ENCODE measurements at regions of chr6 and their contacts with region 1.

Region 1: DNA sequence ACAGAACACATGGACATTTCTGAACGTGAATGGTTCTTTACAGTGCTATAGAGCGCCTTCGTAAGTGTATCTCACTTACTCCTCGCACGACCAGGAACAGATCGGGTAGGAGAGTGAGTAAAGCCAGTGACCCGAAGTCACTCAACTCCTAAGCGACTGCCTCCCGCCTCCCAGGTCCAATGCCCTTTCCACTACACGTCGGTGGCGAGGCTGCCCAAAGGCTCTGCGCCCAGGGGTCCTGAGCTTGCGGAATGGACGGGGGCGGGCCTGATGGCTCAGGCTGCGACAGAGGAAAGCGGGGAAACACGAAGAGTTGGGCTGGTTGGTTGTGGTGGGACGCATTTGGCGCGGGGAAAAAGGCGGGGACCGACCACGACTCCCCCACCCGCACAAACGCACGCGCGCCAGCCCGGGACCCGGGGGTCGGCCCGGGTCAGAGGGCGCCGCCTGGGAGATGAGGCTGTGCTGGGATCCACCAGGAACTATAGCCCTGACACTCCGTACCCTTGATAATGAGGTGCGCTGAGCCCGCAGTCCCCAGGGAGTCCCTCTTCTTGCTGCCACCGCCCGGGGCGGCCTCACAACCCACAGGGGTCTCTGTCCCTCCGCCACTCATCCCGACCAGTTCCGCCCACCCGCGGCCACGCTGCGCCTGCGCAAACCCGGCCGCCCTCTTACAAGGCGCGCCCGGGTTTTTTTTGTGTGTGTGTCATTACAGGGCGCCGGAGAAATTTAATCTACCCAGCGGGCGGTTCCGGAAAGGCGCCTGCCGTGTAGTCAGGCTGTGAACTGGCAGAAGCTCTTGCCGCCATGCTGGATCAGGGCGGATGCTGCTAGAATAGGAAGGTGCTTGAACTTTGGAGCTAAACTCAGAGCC is at the start of gene BLOC1S5:
- DNase-seq: peak; percentile 96
- ATAC-seq: peak; percentile 90
- H3K4me3 Mint-ChIP-seq: peak within 1 kb of the TSS; percentile 93
- H3K27ac Mint-ChIP-seq: peak within 1 kb of the TSS; percentile 91
- H3K4me1 Mint-ChIP-seq: peaks cover 25% of the 10 kb centered on the region
- H3K27me3 Mint-ChIP-seq: no peaks in the 10 kb centered on the region
- CTCF ChIP-seq: no peak
- total RNA-seq, gene BLOC1S5: 13.8 and 16.8 TPM in 2 replicates

Region 2: GRCh38 chr6:6676910-6677441 is 1387.0 kb before region 1 on chr6:
- CTCF ChIA-PET with region 1: no interaction called
- POLR2A ChIA-PET with region 1: no interaction called
- intact Hi-C with region 1: loop called (anchors 5 kb)
- DNase-seq: peak; percentile 65
- ATAC-seq: peak; percentile 94
- H3K4me3 Mint-ChIP-seq: no peak overlapping the region
- H3K27ac Mint-ChIP-seq: no peak overlapping the region
- H3K4me1 Mint-ChIP-seq: peaks cover 8% of the 10 kb centered on the region
- H3K27me3 Mint-ChIP-seq: peaks cover 6% of the 10 kb centered on the region
- CTCF ChIP-seq: peak; percentile 95

Region 3: GRCh38 chr6:7312616-7313504 is 751.1 kb before region 1 on chr6 and contains the start of gene SSR1:
- CTCF ChIA-PET with region 1: no interaction called
- POLR2A ChIA-PET with region 1: no interaction called
- intact Hi-C with region 1: loop called (anchors 1 kb)
- DNase-seq: peak; percentile 94
- ATAC-seq: peak; percentile 98
- H3K4me3 Mint-ChIP-seq: peak within 1 kb of the TSS; percentile 94
- H3K27ac Mint-ChIP-seq: peak within 1 kb of the TSS; percentile 84
- H3K4me1 Mint-ChIP-seq: peaks cover 39% of the 10 kb centered on the region
- H3K27me3 Mint-ChIP-seq: no peaks in the 10 kb centered on the region
- CTCF ChIP-seq: no peak
- total RNA-seq, gene SSR1: 83.4 and 86.7 TPM in 2 replicates

Region 4: DNA sequence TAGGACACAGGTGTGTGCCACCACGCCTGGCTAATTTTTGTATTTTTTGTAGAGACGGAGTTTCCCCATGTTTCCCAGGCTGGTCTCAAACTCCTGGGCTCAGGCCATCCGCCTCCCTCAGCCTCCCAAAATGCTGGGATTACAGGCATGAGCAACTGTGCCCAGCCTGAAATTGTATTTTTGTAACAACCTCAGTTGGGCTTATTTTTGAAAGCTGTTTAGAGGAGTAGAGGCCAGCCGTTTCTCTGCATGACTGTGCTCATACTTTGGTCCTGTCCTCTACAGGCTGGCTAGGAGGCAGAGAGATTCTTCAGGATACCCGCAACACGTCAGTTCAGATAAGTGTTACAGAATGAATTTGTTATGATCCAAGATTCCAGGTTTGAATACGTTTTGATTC is 696.6 kb before region 1 on chr6:
- CTCF ChIA-PET with region 1: no interaction called
- POLR2A ChIA-PET with region 1: no interaction called
- intact Hi-C with region 1: no loop called
- DNase-seq: no peak
- ATAC-seq: no peak
- H3K4me3 Mint-ChIP-seq: no peak overlapping the region
- H3K27ac Mint-ChIP-seq: no peak overlapping the region
- H3K4me1 Mint-ChIP-seq: no peaks in the 10 kb centered on the region
- H3K27me3 Mint-ChIP-seq: peaks cover 13% of the 10 kb centered on the region
- CTCF ChIP-seq: no peak

Region 5: DNA sequence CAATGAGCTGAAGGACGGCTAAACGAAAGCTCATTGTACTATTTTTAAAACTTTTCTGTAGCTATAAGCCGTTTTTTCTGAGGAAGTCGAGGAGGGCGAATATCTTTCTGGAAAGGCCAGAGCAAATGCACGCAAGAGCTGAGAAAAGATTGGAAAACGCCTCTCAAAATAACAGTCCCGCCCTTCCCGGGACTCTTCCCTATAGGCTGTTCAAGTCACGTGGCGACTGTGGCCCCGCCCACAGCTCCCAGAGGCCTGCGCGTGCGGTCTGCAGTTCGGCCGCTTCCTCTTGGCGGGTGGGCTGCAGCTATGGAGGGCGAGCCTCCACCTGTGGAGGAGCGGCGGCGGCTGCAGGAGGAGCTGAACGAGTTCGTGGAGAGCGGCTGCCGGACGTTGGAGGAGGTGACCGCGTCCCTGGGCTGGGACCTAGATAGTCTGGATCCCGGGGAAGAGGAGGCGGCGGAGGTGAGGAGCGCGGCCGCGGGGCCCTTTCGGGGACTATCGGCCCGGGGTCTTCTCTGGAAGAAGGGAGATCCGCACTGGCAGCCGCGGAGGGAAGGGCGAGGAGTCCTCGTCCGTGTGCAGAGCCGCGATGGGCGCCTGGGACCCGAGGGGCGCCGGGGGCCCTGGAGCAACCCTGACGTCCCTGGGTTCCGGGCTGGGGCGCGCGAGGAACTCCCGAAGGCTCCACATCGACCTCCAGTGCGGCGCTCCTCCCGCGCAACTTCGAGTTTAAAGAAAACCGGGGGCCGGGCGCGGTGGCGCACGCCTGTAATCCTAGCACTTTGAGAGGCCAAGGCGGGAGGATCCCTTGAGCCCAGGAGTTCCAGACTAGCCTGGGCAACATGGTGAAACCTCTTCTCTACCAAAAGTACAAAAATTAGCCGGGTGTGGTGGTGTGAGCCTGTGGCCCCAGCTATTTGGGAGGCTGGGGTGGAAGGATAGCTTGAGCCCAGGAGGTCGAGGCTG is 473.8 kb before region 1 on chr6 and contains the start of gene SNRNP48:
- CTCF ChIA-PET with region 1: interaction called, 3 read pairs
- POLR2A ChIA-PET with region 1: no interaction called
- intact Hi-C with region 1: loop called (anchors 1 kb)
- DNase-seq: peak; percentile 88
- ATAC-seq: peak; percentile 100
- H3K4me3 Mint-ChIP-seq: peak within 1 kb of the TSS; percentile 98
- H3K27ac Mint-ChIP-seq: peak within 1 kb of the TSS; percentile 84
- H3K4me1 Mint-ChIP-seq: peaks cover 31% of the 10 kb centered on the region
- H3K27me3 Mint-ChIP-seq: no peaks in the 10 kb centered on the region
- CTCF ChIP-seq: no peak
- total RNA-seq, gene SNRNP48: 15.4 and 18.7 TPM in 2 replicates

Region 6: GRCh38 chr6:7899101-7899888 is 164.7 kb before region 1 on chr6:
- CTCF ChIA-PET with region 1: no interaction called
- POLR2A ChIA-PET with region 1: no interaction called
- intact Hi-C with region 1: loop called (anchors 1 kb)
- DNase-seq: no peak
- ATAC-seq: peak; percentile 61
- H3K4me3 Mint-ChIP-seq: no peak overlapping the region
- H3K27ac Mint-ChIP-seq: no peak overlapping the region
- H3K4me1 Mint-ChIP-seq: peaks cover 32% of the 10 kb centered on the region
- H3K27me3 Mint-ChIP-seq: no peaks in the 10 kb centered on the region
- CTCF ChIP-seq: no peak

Region 7: DNA sequence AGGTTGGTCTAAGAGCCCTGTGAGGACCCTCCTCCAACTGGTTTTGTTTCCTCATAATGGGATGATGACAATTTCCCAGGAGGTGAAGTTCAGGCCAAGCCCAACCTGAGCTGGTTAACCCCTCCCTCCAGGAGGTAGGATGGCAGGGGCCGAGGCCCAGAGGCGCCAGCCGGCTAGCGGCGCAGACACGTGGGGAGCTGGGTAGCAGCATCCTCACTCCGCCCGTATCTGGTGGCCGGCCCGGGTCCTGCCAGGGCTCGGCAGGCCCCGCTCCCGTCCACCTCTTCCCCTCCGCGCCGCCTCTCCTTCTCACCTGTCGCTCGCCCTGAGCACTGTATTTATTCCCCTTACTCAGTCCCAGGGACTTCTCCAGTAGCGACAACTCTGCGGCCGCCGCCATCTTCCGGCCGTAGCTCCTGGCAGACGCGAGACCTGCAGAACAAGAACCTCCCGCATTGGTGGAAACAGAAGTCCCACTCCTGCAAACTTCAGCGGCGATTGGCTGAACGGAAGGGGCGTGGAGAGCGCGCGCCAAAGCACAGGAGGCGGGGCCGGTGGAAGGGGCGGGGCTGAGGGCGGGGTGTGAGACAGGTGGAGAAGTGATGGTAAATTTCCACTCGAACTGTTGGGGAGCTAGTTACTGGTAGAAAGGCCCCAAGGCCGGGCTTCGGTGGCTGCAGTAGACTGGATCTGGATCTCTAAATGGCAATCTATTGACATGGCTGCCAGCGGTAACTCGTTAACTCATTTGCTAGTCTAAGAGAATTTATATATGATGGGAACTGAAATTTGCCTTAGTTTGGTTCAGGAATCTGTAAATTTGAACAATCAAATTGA is 38.3 kb after region 1 on chr6 and contains the start of gene EEF1E1:
- CTCF ChIA-PET with region 1: no interaction called
- POLR2A ChIA-PET with region 1: interaction called, 59 read pairs
- intact Hi-C with region 1: loop called (anchors 1 kb)
- DNase-seq: peak; percentile 80
- ATAC-seq: peak; percentile 98
- H3K4me3 Mint-ChIP-seq: peak within 1 kb of the TSS; percentile 97
- H3K27ac Mint-ChIP-seq: peak within 1 kb of the TSS; percentile 93
- H3K4me1 Mint-ChIP-seq: peaks cover 25% of the 10 kb centered on the region
- H3K27me3 Mint-ChIP-seq: peaks cover 14% of the 10 kb centered on the region
- CTCF ChIP-seq: no peak
- total RNA-seq, gene EEF1E1: 32.5 and 33.0 TPM in 2 replicates

Region 8: DNA sequence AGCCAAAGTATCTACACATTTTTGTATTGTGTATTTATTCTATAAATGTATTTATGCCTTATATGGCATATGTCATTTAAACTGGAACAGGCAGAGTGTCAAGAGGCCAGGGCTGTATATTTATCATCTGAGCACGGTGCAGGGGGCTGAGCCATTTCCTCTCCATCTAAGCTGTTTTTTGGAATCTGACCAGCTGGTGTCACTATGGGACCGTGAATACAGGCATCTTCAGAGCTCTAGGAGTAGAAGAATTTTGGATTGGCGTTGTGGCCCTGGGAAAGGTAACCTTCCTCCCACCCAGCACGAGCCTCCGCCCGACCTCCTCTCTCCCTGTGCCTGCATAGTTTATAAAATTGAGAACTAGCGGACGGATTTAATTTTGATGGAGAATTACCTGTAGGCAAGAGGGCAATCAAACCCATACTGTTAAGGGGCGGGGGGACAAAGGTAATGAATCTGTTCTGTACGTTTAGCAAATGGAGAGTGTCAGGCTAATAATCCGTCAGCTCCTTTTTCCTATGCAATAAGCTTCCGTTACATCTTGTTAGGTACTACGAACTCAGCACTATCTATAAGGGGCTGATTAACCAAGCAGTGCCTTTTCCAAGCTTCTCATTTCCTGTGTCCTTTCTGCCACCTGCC is 67.4 kb after region 1 on chr6:
- CTCF ChIA-PET with region 1: no interaction called
- POLR2A ChIA-PET with region 1: no interaction called
- intact Hi-C with region 1: no loop called
- DNase-seq: no peak
- ATAC-seq: peak; percentile 25
- H3K4me3 Mint-ChIP-seq: no peak overlapping the region
- H3K27ac Mint-ChIP-seq: no peak overlapping the region
- H3K4me1 Mint-ChIP-seq: no peaks in the 10 kb centered on the region
- H3K27me3 Mint-ChIP-seq: peaks cover 9% of the 10 kb centered on the region
- CTCF ChIP-seq: no peak

Region 9: GRCh38 chr6:8435160-8435852 is 371.3 kb after region 1 on chr6 and contains the start of gene SLC35B3:
- CTCF ChIA-PET with region 1: no interaction called
- POLR2A ChIA-PET with region 1: interaction called, 3 read pairs
- intact Hi-C with region 1: loop called (anchors 2 kb)
- DNase-seq: peak; percentile 99
- ATAC-seq: peak; percentile 95
- H3K4me3 Mint-ChIP-seq: peak within 1 kb of the TSS; percentile 95
- H3K27ac Mint-ChIP-seq: peak within 1 kb of the TSS; percentile 95
- H3K4me1 Mint-ChIP-seq: peaks cover 42% of the 10 kb centered on the region
- H3K27me3 Mint-ChIP-seq: no peaks in the 10 kb centered on the region
- CTCF ChIP-seq: no peak
- total RNA-seq, gene SLC35B3: 12.9 and 13.3 TPM in 2 replicates

Measured in activated B cell treated with CpG ODN at 0.5 μM for 24 hours (primary cell).